ENCODE measurements at regions of chr2 and their contacts with region 1.

Region 1: GRCh38 chr2:88590998-88591613 is 36.2 kb downstream of the EIF2AK3 start:
- DNase-seq: peak; percentile 82
- ATAC-seq: peak; percentile 84
- H3K4me3 ChIP-seq: no peak overlapping the region
- H3K27ac ChIP-seq: no peak overlapping the region
- H3K4me1 ChIP-seq: no peaks in the 10 kb centered on the region
- H3K27me3 ChIP-seq: no peaks in the 10 kb centered on the region
- CTCF ChIP-seq: peak; percentile 93

Region 2: GRCh38 chr2:88554189-88554588 is 36.9 kb before region 1 on chr2:
- CTCF ChIA-PET with region 1: no interaction called
- POLR2A ChIA-PET with region 1: no interaction called
- intact Hi-C with region 1: no loop called
- DNase-seq: peak; percentile 12
- ATAC-seq: peak; percentile 24
- H3K4me3 ChIP-seq: no peak overlapping the region
- H3K27ac ChIP-seq: no peak overlapping the region
- H3K4me1 ChIP-seq: no peaks in the 10 kb centered on the region
- H3K27me3 ChIP-seq: no peaks in the 10 kb centered on the region
- CTCF ChIP-seq: peak; percentile 38; the same call in 1 of the 2 replicates

Region 3: DNA sequence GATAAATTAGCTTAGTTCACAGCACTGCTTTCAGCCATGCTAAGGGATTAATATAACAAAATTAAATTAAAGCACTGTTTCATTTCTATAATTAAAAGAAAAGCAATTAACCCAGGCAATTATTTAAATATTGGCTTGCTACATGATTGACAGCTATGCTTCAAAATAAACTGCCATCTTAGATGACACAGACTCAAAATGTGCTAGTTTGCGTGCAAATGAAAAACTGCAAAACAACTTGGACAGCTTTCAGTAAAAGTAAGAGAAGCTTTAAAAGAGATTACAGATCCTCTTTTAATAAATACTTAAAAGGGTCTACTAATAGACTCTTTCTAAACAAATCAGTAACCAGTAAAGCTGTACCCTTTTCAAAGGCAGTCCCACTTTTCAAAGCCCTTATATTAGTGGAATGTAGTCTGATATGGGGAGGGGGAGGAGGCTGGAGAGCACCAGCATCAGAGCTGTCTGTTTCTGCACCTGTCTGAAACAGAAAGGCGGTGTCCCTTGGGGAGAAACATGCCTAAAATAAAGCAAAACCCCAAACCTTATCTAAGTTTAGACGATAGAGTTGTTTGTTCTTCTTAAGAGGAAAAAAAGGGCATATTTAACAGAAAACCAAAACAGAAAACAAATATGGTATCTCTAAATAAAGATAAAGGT is 15.4 kb after region 1 on chr2:
- CTCF ChIA-PET with region 1: interaction called, 10 read pairs
- POLR2A ChIA-PET with region 1: no interaction called
- intact Hi-C with region 1: no loop called
- DNase-seq: no peak
- ATAC-seq: no peak
- H3K4me3 ChIP-seq: no peak overlapping the region
- H3K27ac ChIP-seq: no peak overlapping the region
- H3K4me1 ChIP-seq: peaks cover 22% of the 10 kb centered on the region
- H3K27me3 ChIP-seq: no peaks in the 10 kb centered on the region
- CTCF ChIP-seq: no peak

Region 4: GRCh38 chr2:88627056-88627855 is 36.1 kb after region 1 on chr2 and contains the start of gene EIF2AK3:
- CTCF ChIA-PET with region 1: no interaction called
- POLR2A ChIA-PET with region 1: no interaction called
- intact Hi-C with region 1: loop called (anchors 1 kb)
- DNase-seq: peak; percentile 100
- ATAC-seq: peak; percentile 85
- H3K4me3 ChIP-seq: peak within 1 kb of the TSS; percentile 74
- H3K27ac ChIP-seq: peak within 1 kb of the TSS; percentile 88
- H3K4me1 ChIP-seq: peaks cover 22% of the 10 kb centered on the region
- H3K27me3 ChIP-seq: no peaks in the 10 kb centered on the region
- CTCF ChIP-seq: no peak
- total RNA-seq, gene EIF2AK3: 10.7 and 16.2 TPM in 2 replicates

Measured in PC-3 (cell line).